Left cardiac atrium (tissue), 4 donors: ENCODE measurements at regions of chr12 and their contacts with region 1.

Region 1: DNA sequence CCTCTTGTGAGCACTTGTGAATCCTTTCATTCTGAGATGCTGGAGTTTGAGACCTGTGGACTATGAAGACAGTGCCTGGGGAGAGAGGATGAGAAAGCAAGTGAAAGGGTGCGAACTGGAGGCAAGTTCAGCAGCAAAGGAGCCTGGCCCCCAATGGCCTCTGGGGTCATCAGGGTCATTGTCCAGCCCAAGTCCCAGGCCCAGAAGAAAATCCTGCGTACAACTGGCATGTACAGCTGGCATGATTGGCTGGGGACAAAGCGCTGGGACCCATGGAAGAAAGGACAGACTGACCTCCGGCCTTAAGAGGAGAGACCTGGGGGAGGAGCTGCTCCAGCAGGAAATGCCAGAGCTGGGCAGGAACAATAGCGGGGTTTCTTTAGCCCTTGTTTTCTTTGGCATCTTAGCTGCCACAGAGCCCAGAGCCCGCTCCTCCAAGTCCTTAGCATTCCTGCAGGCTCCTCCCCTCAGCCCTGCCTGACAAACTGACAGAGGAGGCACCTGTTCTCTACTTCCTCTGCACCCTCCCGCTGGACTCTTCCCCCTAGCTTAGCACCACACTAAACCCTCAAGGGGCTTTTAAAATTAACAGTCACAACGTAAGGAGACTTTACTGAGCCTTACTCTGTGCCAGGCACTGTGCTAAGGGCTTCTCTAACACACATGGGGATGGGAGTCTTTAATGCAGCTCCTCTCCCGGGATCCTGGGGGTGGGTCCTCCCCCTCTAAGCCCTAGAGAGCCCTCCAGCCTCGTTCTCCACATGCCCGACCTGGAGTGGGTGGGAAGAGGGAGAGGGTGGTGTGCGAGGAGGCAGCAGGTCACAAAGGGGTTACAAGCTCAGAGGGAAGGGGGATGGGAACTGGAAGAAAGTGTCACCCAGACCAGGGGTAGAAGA is 1.9 kb upstream of the AQP5 start:
- DNase-seq: no peak
- ATAC-seq: no peak

Region 2: GRCh38 chr12:49872781-49873181 is 87.0 kb before region 1 on chr12:
- intact Hi-C with region 1: loop called (anchors 2 to 10 kb)
- DNase-seq: no peak
- ATAC-seq: no peak

Region 3: DNA sequence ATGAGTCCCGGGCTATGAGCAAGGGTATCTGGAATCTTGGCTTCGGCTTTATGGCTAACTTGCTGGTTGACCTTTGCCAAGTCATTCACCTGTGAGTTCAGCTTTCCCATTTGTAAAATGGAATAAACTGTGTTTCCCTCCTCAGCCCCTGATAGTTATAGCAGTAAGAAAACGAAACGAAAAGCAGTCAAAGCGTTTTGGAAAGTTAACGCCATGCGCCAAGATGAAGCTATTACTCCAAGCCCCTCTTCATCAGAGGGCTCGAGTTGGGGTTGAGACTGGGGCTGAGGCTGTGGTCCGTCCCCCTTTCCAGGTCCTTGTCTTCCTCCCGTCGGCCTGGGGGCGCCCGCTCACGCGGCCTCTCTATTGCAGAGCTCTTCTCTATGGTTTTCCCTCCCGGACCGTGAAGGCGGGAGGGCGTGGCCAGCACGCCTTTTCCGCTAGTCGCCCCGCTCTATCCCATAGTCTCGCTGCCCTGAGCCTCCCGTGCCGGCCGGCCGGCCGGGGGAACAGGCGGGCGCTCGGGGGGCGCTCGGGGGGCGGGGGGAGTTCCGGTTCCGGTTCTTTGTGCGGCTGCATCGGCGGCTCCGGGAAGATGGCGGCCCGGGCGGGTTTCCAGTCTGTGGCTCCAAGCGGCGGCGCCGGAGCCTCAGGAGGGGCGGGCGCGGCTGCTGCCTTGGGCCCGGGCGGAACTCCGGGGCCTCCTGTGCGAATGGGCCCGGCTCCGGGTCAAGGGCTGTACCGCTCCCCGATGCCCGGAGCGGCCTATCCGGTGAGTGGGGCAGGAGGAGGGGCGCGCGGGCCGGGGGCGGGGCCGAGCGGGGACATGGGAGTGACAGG is 125.2 kb after region 1 on chr12 and contains the start of gene SMARCD1:
- intact Hi-C with region 1: no loop called
- DNase-seq: peak; percentile 94
- ATAC-seq: peak; percentile 94 to 97
- total RNA-seq, gene SMARCD1: 18.3 to 27.7 TPM